Calu3 (cell line): ENCODE measurements at regions of chr22 and their contacts with region 1.

Region 1: DNA sequence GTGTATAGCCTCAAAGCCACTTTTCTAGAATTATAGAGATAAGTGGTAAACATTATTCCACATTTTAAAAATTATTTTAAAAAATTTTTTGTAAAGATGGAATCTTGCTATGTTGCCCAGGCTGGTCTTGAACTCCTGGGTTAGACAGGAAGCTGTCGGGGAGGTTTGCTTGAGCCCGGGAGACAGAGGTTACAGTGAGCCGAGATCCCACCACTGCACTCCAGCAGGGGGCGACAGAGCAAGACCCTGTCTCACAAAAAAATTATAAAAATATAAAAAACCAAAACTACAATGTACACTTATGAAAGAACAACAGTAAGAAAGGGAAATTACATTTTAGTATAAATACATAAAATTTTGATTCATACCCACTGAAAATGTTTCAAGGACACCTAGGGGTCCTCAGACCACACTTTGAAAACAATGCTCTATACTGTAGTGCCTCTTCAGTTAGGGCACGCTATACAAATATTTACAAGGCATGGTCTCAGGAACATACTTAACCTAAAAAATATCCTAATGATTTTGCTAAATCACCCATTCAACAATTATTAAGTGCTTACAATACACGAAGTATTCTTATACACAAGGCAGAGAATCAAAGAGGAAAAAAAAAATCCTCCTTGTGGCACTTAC is 111.2 kb downstream of the MRTFA start:
- DNase-seq: peak; percentile 69
- H3K4me3 Mint-ChIP-seq: no peak overlapping the region
- H3K27ac Mint-ChIP-seq: no peak overlapping the region
- H3K4me1 Mint-ChIP-seq: peaks cover 28% of the 10 kb centered on the region
- H3K27me3 Mint-ChIP-seq: no peaks in the 10 kb centered on the region
- CTCF ChIP-seq: peak; percentile 90

Region 2: DNA sequence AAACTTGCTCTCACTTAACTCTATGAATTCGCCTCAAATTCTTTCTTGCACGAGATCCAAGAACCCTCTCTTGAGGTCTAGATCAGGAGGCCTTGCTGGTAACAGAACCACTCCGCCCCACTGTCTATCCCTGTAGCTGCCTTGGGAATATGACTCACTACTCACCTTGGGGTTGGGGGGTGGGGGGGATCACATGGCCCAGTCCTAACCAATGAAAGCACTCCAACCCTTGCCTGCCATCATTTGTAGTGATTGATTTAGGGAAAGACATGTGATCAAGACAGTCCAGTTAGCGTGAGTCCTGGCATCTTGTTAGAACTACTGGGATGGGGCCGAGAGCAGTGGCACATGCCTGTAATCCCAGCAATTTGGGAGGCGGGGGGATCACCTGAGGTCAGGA is 115.9 kb after region 1 on chr22:
- CTCF ChIA-PET with region 1: interaction called, 7 read pairs
- intact Hi-C with region 1: loop called (anchors 1 kb)
- DNase-seq: no peak
- H3K4me3 Mint-ChIP-seq: no peak overlapping the region
- H3K27ac Mint-ChIP-seq: no peak overlapping the region
- H3K4me1 Mint-ChIP-seq: peaks cover 26% of the 10 kb centered on the region
- H3K27me3 Mint-ChIP-seq: no peaks in the 10 kb centered on the region
- CTCF ChIP-seq: no peak

Region 3: GRCh38 chr22:40838486-40838885 is 313.1 kb after region 1 on chr22:
- CTCF ChIA-PET with region 1: no interaction called
- intact Hi-C with region 1: no loop called
- DNase-seq: no peak
- H3K4me3 Mint-ChIP-seq: no peak overlapping the region
- H3K27ac Mint-ChIP-seq: no peak overlapping the region
- H3K4me1 Mint-ChIP-seq: peaks cover 18% of the 10 kb centered on the region
- H3K27me3 Mint-ChIP-seq: no peaks in the 10 kb centered on the region
- CTCF ChIP-seq: no peak